A549 (cell line): ENCODE measurements at regions of chr14 and their contacts with region 1.

Region 1: DNA sequence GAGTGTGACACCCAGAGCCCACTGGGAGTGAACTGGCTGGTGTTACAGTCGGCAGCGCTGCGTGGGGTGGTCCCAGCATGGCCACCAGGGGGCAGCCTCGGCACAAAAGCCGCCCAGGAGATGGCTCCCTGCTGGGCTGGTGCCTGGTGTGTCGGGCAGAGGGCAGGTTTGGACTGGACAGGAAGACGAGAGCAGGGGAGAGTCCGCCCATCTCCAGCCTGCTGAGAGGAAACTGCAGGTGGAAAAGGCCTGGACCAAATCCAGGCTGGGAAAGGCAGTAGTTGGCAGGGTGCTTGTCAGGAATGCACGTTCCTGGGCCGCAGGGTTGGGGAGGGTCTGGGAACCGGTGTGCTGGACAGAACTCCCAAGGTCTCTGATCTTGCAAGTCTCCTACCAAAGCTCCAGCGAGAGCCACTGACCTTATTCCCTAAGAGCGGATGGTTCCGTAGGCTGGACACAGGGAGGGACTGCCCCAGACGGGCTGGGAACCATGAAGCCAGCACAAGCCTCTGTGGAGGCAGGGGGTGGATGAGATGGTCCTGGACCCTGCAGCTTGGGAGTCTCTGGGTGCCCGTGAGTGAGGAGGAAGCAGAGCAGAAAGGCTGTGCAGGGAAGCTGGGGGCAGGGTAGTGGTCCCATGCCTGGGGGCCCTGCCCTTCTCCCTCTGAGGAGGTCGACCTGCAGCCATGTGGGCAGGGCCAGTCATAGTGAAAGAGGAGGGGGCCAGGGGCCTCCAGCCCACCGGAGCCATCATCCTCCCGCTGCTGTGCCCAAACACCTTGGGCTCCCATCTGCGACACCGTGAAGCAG is 1.8 kb downstream of the AHNAK2 start:
- DNase-seq: peak; percentile 64 to 90
- ATAC-seq: peak in 1 of 2 experiments; percentile 56; a peak in 3 of 6 replicates
- H3K4me3 ChIP-seq: peak overlapping the region; percentile 63
- H3K27ac ChIP-seq: peak overlapping the region; percentile 97 to 99
- H3K4me1 ChIP-seq: peaks cover 81% of the 10 kb centered on the region
- CTCF ChIP-seq: peak; percentile 91
- EP300 ChIP-seq: no peak
- POLR2A ChIP-seq: 0 out of 2 replicates have a peak, but pooled peaks have one; percentile 21
- RAD21 ChIP-seq: peak; percentile 87 to 92

Region 2: DNA sequence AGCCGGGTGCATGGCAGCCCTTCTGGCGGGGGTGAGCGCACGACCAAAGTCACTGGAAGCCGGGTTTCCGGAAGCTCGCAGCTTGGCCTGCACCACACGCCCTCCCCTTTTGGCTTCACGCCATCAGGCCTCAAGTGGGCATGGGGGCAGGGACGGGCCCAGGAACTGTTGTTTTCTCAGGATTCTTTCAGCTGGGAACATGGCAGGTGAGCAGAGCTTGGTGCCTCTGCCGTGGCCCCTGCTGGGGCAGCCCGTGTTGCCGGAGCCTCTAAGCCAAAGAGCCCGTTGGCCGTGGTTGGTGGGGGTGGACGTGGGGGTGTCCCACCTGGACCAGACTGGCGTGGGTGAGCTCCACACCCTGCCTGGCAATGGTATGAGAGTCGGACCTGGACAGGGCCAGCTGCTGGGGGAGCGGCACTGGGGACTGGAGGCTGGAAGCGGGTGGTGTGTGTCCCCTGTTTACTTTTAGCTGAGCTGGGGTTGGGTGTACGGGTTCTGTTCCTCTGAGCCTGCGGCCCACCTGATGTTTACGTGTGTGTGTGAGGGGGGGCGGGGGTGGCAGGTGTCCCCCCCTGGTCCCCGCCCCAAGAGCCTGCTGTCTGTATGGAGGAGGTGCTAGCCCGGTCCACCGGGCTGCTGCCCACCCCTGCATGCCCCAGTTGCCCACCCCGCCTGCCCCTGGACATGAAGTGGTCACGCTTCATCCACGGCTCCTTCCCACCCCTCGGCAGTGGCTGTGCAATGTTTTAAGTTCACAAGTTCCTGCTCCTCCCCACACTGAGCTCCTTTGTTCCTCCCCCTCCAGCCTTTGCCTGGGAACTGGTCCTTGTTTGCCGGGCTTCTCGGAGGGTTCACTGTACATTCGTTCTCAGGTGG is 80.4 kb before region 1 on chr14:
- CTCF ChIA-PET with region 1: interaction called, 40 read pairs
- POLR2A ChIA-PET with region 1: no interaction called
- DNase-seq: no peak
- ATAC-seq: peak; percentile 9 to 30; a peak in 3 of 6 replicates
- H3K4me3 ChIP-seq: no peak overlapping the region
- H3K27ac ChIP-seq: no peak overlapping the region
- H3K4me1 ChIP-seq: peaks cover 15% of the 10 kb centered on the region
- CTCF ChIP-seq: no peak
- EP300 ChIP-seq: no peak
- POLR2A ChIP-seq: no peak
- RAD21 ChIP-seq: no peak

Region 3: DNA sequence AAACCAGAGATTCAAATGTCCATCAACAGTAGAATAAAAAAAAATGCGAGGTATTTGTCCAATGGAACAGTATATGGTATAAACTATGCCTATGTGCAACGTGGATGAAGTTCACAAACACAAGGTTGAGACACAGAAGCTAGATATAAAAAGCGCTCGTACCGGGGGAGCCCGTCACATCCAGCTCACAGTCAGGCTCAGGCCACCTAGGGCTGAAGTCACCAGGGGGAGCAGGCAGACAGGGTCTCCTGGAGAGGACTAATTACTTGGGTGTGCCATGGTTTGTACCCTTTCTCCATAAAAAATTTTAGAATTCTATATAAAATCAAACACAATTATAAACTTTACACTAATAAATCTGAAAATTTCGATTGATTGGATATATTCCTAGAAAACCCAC is 11.9 kb before region 1 on chr14:
- CTCF ChIA-PET with region 1: interaction called, 13 read pairs
- POLR2A ChIA-PET with region 1: no interaction called
- DNase-seq: no peak
- ATAC-seq: no peak
- H3K4me3 ChIP-seq: no peak overlapping the region
- H3K27ac ChIP-seq: no peak overlapping the region
- H3K4me1 ChIP-seq: peaks cover 32% of the 10 kb centered on the region
- CTCF ChIP-seq: no peak
- EP300 ChIP-seq: no peak
- POLR2A ChIP-seq: no peak
- RAD21 ChIP-seq: no peak

Region 4: DNA sequence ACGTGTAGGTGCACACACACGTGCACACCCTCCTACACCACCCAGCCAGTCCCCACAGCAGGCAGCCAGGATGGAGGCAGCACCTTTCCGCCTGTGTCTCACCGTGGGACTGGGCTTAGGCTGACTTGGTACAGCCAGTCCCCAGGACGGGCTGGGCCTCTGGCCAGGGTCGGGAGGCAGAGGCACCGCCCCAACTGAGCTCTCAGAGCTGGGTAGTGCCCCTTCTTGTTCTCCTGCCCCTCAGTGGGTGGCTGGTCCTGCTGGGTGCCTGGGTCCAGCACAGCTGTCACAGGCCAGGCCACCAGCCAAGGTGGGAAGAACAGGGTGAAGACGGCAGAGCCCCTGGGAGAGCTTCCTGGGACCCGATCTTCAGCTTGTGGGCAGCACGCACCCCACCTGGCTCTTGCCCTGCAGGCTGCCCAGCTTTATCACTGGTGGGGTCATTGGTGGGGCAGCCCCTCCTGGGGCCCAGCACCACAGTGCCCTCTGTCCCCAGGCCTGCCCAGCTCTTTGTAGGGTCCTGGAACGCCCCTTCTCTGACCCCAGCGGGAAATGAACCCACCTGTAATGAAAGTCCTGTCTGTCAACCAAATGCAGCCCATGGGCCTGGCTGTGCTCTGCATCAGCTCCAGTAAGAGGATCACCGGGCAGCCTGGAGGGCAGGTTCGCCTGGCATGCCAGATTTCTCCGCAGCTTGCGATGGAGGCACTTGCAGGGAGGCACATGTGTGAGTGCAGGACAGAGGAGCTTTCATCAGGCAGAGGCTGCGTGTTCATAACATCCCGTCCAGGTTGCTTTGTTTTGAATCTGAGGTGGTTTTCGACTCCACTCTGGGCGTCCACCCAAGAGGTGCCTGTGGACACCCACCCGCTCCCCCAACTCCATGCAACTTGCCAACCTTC is 29.8 kb after region 1 on chr14:
- CTCF ChIA-PET with region 1: interaction called, 81 read pairs
- POLR2A ChIA-PET with region 1: interaction called, 4 read pairs
- DNase-seq: no peak
- ATAC-seq: peak; percentile 47 to 51
- H3K4me3 ChIP-seq: no peak overlapping the region
- H3K27ac ChIP-seq: no peak overlapping the region
- H3K4me1 ChIP-seq: no peaks in the 10 kb centered on the region
- CTCF ChIP-seq: no peak
- EP300 ChIP-seq: no peak
- POLR2A ChIP-seq: no peak
- RAD21 ChIP-seq: no peak

Region 5: DNA sequence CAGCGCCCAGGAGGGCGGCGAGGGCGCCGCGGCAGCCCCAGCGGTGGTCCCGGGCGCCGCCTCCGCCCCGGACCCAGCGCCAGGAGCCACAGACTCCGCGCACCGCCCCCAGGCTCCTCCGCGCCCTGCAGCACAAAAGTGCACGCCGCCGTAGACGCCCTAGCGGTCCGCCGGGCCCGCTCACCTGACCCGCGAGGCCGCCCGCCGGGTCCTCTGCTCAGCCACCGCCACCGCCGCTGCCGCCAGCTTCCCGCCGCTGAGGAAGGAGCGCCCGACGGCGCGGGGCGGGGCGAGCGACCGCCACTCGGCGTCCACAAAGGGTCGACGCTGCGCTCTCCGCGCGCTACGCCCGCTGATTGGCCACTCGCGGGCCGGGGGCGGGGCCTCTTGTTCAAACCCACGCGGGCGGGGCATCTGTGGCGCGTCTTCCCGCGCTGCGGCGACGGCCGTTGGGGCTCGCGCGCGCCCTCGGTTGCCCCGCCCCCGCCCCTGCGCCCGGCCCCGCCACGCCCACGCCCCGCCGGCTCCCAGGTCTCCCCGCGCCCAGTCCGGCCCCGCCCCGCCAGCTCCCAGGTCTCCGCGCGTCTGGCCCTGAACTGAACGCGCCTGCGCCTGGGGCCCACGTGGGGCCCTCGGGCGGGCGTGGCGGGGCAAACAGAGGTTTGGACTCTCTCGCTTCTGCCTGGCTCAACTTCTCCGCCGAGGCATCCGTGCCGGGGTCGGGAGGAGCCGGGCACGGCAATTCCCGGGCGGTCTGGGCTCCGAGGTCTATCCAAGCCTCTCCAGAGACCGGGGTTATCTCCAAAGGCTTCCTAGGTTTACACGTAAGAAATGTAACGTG is 44.6 kb after region 1 on chr14 and contains the start of gene CDCA4:
- CTCF ChIA-PET with region 1: interaction called, 81 read pairs
- POLR2A ChIA-PET with region 1: interaction called, 76 read pairs
- DNase-seq: peak; percentile 96 to 97
- ATAC-seq: peak; percentile 81 to 84
- H3K4me3 ChIP-seq: peak within 1 kb of the TSS; percentile 97
- H3K27ac ChIP-seq: peak within 1 kb of the TSS; percentile 97 to 98
- H3K4me1 ChIP-seq: peaks cover 75% of the 10 kb centered on the region
- CTCF ChIP-seq: no peak
- EP300 ChIP-seq: no peak
- POLR2A ChIP-seq: peak; percentile 71
- RAD21 ChIP-seq: no peak
- polyA plus RNA-seq, gene CDCA4: 19.5 and 24.2 TPM in 2 replicates

Region 6: GRCh38 chr14:105034314-105035039 is 58.1 kb after region 1 on chr14:
- CTCF ChIA-PET with region 1: interaction called, 39 read pairs
- POLR2A ChIA-PET with region 1: interaction called, 3 read pairs
- DNase-seq: no peak
- ATAC-seq: no peak
- H3K4me3 ChIP-seq: no peak overlapping the region
- H3K27ac ChIP-seq: no peak overlapping the region
- H3K4me1 ChIP-seq: 0 out of 3 replicates have a peak, but pooled peaks cover 3% of the 10 kb centered on the region
- CTCF ChIP-seq: no peak
- EP300 ChIP-seq: no peak
- POLR2A ChIP-seq: no peak
- RAD21 ChIP-seq: no peak

Region 7: DNA sequence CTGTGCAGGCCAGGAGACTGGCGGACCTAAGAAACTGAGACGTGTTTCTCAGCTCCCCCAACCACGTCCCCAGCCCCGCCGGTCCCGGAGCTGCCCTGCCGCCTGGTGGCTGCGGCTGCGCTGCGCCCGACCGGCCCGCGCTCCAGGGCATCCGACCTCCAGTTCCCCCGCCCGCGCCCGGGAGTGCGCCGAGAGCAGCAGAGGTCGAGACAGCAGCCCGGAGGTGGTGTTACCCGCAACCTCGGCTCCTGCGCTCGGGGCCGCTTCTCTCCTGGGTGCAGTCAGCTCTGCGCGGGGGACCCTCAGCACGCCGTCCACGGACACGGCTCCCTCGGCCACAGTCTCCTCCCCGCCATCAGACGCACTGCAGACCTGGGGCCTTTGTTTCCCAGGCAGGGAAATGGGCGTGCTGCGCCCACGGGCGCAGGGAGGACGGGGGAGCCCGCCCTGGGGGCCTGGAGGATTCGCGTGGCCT is 110.5 kb after region 1 on chr14:
- CTCF ChIA-PET with region 1: interaction called, 28 read pairs
- POLR2A ChIA-PET with region 1: interaction called, 19 read pairs
- DNase-seq: peak; percentile 63 to 85
- ATAC-seq: peak; percentile 20 to 47
- H3K4me3 ChIP-seq: peak overlapping the region; percentile 68
- H3K27ac ChIP-seq: peak overlapping the region; percentile 98 to 100
- H3K4me1 ChIP-seq: peaks cover 52% of the 10 kb centered on the region
- CTCF ChIP-seq: peak; percentile 54
- EP300 ChIP-seq: no peak
- POLR2A ChIP-seq: peak; percentile 40
- RAD21 ChIP-seq: peak; percentile 49 to 65; a peak in 4 of 5 replicates